CD8-positive, alpha-beta T cell (primary cell): ENCODE measurements at regions of chr2 and their contacts with region 1.

Region 1: DNA sequence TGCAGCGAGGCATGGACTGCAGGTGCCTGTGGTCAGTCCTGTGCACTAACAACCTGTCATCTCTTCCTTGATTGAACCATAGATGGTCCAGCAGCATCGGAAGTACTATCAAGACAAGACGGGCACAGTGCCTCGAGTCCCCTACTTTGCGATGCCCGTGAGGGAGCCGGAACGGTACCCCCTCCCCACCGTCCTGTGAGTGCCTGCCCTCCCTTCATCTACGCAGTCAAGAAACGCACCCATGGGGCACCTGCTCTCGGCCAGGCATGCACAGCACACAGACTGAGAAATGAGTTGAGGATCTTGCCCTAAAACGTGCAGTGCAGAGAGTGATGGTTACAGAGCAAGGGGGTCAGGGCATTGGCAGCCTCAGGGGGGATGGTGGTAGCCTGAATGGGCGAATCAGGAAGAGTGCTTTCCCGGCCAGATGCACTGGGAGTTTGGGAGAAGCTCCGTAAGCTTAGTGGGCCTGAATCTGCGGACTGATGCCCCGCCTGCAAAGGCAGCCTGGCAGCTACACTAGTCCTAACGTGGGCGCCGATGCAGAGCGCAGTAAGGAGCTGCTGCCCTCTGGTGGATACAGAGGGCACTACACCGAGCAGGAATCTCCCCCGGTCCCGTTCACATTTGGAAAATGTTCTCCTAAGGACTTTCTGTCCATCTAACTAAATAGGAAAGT is 63.6 kb downstream of the CIB4 start:
- DNase-seq: peak; percentile 32 to 76 (median 63)
- ATAC-seq: peak; percentile 92
- H3K4me3 ChIP-seq: no peak overlapping the region
- H3K4me3 Mint-ChIP-seq: no peak overlapping the region
- H3K27ac ChIP-seq: no peak overlapping the region
- H3K27ac Mint-ChIP-seq: no peak overlapping the region
- H3K4me1 ChIP-seq: no peaks in the 10 kb centered on the region
- H3K4me1 Mint-ChIP-seq: no peaks in the 10 kb centered on the region
- H3K27me3 ChIP-seq: no peaks in the 10 kb centered on the region
- H3K27me3 Mint-ChIP-seq: peaks cover 17% of the 10 kb centered on the region
- CTCF ChIP-seq: peak; percentile 95

Region 2: GRCh38 chr2:25851740-25852503 is 725.7 kb before region 1 on chr2:
- CTCF ChIA-PET with region 1: no interaction called
- POLR2A ChIA-PET with region 1: no interaction called
- intact Hi-C with region 1: loop called in 1 of 2 experiments (anchors 5 kb)
- DNase-seq: peak in 5 of 9 experiments; percentile 10 to 86 (median 26)
- ATAC-seq: peak; percentile 95
- H3K4me3 ChIP-seq: peak overlapping the region in 1 of 2 experiments; percentile 6
- H3K4me3 Mint-ChIP-seq: peak overlapping the region; percentile 65
- H3K27ac ChIP-seq: peak overlapping the region in 1 of 2 experiments; percentile 30
- H3K27ac Mint-ChIP-seq: no peak overlapping the region
- H3K4me1 ChIP-seq: peaks cover 32% of the 10 kb centered on the region
- H3K4me1 Mint-ChIP-seq: peaks cover 50% of the 10 kb centered on the region
- H3K27me3 ChIP-seq: no peaks in the 10 kb centered on the region
- H3K27me3 Mint-ChIP-seq: no peaks in the 10 kb centered on the region
- CTCF ChIP-seq: peak; percentile 74

Region 3: GRCh38 chr2:25991965-25992364 is 585.6 kb before region 1 on chr2:
- CTCF ChIA-PET with region 1: interaction called, 3 read pairs
- POLR2A ChIA-PET with region 1: no interaction called
- intact Hi-C with region 1: loop called in 1 of 2 experiments (anchors 5 kb)
- DNase-seq: no peak
- ATAC-seq: no peak
- H3K4me3 ChIP-seq: no peak overlapping the region
- H3K4me3 Mint-ChIP-seq: peak overlapping the region; percentile 79
- H3K27ac ChIP-seq: no peak overlapping the region
- H3K27ac Mint-ChIP-seq: no peak overlapping the region
- H3K4me1 ChIP-seq: no peaks in the 10 kb centered on the region
- H3K4me1 Mint-ChIP-seq: peaks cover 6% of the 10 kb centered on the region
- H3K27me3 ChIP-seq: peaks cover 0 to 2% of the 10 kb centered on the region in 2 experiments
- H3K27me3 Mint-ChIP-seq: no peaks in the 10 kb centered on the region
- CTCF ChIP-seq: no peak

Region 4: DNA sequence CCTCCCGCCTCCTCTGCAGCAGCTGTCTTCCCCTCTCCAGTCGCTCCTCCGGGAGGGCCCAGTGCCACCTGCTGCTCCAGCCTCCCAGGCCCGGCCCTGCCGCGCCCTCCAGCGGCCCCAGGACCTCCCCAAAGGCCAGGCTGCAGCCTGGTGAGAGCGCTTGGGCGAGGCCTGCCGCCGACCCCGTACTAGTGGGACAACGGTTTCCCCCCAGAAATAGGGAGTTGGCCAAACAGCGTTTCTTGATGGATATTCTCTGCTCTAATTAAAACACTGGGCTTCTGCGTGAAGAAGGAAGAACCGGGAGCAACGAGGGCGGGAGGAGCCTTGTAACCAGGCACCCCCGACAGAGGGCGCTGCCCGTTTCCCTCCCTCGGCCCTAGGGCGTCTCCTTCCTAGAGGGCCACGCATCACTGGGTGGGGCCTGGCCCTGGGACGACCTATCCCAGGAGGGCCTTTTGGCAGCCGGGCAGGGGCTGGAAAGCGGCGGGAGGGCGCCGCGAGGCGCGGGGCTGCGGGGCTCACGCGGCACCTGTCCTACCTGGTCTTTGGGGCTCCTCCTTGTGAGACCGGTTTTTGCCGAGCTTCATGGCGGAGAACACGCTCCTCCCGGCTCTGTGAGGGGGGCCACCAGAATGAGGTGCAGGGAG is 74.2 kb before region 1 on chr2:
- CTCF ChIA-PET with region 1: interaction called, 51 read pairs
- POLR2A ChIA-PET with region 1: no interaction called
- intact Hi-C with region 1: loop called (anchors 1 kb)
- DNase-seq: peak; percentile 57 to 84 (median 78)
- ATAC-seq: peak; percentile 98
- H3K4me3 ChIP-seq: peak overlapping the region; percentile 54 to 81
- H3K4me3 Mint-ChIP-seq: peak overlapping the region; percentile 78
- H3K27ac ChIP-seq: no peak overlapping the region
- H3K27ac Mint-ChIP-seq: no peak overlapping the region
- H3K4me1 ChIP-seq: peaks cover 9% of the 10 kb centered on the region
- H3K4me1 Mint-ChIP-seq: peaks cover 6% of the 10 kb centered on the region
- H3K27me3 ChIP-seq: peaks cover 0 to 7% of the 10 kb centered on the region in 2 experiments
- H3K27me3 Mint-ChIP-seq: no peaks in the 10 kb centered on the region
- CTCF ChIP-seq: peak; percentile 80

Region 5: GRCh38 chr2:26566081-26566375 is 11.5 kb before region 1 on chr2:
- CTCF ChIA-PET with region 1: interaction called, 15 read pairs
- POLR2A ChIA-PET with region 1: no interaction called
- intact Hi-C with region 1: no loop called
- DNase-seq: no peak
- ATAC-seq: no peak
- H3K4me3 ChIP-seq: no peak overlapping the region
- H3K4me3 Mint-ChIP-seq: no peak overlapping the region
- H3K27ac ChIP-seq: no peak overlapping the region
- H3K27ac Mint-ChIP-seq: no peak overlapping the region
- H3K4me1 ChIP-seq: peaks cover 6% of the 10 kb centered on the region
- H3K4me1 Mint-ChIP-seq: peaks cover 6% of the 10 kb centered on the region
- H3K27me3 ChIP-seq: peaks cover 3 to 18% of the 10 kb centered on the region in 2 experiments
- H3K27me3 Mint-ChIP-seq: peaks cover 47% of the 10 kb centered on the region
- CTCF ChIP-seq: no peak